ENCODE measurements at regions of chr3 and their contacts with region 1.

Region 1: DNA sequence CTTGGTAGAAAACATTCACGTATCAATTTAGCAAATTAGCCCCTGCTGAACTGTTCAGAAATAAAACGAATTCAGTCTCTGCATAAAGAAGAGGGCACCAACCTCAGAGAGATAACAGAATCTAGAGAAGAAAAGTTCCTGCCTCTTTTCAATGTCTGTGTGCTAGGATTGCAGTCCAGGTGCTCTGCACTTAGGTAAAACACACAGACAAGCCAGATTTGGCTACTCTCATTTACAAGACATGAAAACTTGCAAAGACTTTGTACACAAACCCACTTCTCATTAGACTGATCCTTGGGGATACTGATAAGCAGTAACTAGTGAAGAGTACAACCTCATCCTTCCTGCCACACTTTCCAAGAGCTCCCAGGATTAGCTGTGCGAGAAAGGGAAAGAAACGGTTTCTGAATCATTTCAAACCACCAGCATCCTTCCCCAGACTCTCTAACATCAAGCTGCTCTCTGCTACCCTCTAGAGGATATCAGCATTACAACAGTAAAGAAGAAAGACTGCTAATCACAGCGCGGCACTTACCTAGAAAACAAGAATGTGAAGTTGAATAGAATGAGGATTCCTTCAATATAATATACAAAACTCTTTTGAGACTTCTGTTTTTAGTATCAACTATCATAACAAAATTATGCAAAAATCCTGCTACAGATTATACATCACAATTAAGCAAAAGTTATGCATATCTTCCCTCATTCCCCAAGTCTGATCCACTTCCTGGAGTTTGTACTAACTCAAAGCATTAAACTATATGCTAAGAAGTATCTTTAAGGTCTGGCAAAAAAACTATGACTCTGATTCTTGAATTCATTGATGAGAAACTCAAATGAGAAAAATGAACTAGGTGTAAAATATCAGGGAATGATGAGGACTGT is 306.4 kb downstream of the MAGI1 start:
- DNase-seq: peak; percentile 5
- H3K4me3 Mint-ChIP-seq: no peak overlapping the region
- H3K27ac Mint-ChIP-seq: no peak overlapping the region
- H3K4me1 Mint-ChIP-seq: no peaks in the 10 kb centered on the region
- H3K27me3 Mint-ChIP-seq: no peaks in the 10 kb centered on the region

Region 2: GRCh38 chr3:65342084-65342683 is 390.1 kb before region 1 on chr3:
- CTCF ChIA-PET with region 1: no interaction called
- intact Hi-C with region 1: loop called (anchors 1 kb)
- DNase-seq: peak; percentile 49
- H3K4me3 Mint-ChIP-seq: no peak overlapping the region
- H3K27ac Mint-ChIP-seq: no peak overlapping the region
- H3K4me1 Mint-ChIP-seq: no peaks in the 10 kb centered on the region
- H3K27me3 Mint-ChIP-seq: no peaks in the 10 kb centered on the region

Region 3: GRCh38 chr3:66121318-66121717 is 389.0 kb after region 1 on chr3:
- CTCF ChIA-PET with region 1: no interaction called
- intact Hi-C with region 1: no loop called
- DNase-seq: no peak
- H3K4me3 Mint-ChIP-seq: no peak overlapping the region
- H3K27ac Mint-ChIP-seq: no peak overlapping the region
- H3K4me1 Mint-ChIP-seq: no peaks in the 10 kb centered on the region
- H3K27me3 Mint-ChIP-seq: peaks cover 5% of the 10 kb centered on the region

Region 4: DNA sequence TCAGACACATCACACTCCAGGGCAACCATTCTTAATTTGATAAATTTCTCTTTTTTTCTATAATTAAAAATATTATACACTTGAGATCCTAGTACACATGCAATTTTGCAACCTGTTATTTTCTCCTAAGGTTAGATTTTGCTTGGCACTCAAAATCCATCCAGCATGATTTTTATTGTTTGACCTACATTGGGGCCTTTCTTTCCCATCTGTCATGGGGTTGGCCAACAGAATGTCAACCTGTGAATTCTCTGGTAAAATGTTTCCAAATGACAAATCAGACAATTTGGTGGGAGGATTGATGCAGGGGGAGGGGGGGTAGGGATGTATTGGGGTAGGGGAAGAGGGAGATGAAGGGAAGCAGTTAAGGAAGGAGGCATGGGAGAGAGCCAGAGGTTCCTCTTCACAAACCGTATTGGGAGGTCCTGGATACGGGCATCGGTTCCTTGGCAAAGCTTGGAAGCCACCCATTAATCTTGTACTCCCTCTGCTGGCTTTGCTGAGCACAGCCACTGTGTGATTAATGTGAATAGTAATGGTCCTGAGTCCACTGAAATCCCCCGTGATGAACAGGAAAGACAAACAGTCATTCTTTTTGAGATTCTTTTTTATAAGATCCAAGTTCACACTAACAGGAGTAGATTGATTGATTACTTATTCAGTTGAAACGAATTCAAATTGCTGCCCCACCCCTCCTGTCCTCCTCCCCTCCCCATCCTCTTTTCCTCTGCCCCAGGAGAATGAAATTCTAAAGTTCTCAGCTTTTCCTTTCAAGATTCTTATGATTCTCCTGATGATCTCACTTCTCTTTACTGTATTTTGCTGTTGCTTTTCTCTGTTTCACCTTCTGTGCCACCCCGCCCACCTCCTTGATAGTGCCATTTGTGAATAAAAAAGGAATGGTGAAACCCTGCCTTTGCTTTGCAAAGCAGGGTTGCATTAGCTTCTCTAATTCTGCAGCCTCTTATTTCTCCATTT is 406.3 kb after region 1 on chr3:
- CTCF ChIA-PET with region 1: no interaction called
- intact Hi-C with region 1: loop called (anchors 1 kb)
- DNase-seq: peak; percentile 31
- H3K4me3 Mint-ChIP-seq: no peak overlapping the region
- H3K27ac Mint-ChIP-seq: peak overlapping the region; percentile 36
- H3K4me1 Mint-ChIP-seq: peaks cover 3% of the 10 kb centered on the region
- H3K27me3 Mint-ChIP-seq: peaks cover 7% of the 10 kb centered on the region

Measured in activated naive CD4-positive, alpha-beta T cell treated with anti-CD3 and anti-CD28 coated beads for 36 hours (primary cell).